ENCODE measurements at regions of chr6 and their contacts with region 1.

Region 1: DNA sequence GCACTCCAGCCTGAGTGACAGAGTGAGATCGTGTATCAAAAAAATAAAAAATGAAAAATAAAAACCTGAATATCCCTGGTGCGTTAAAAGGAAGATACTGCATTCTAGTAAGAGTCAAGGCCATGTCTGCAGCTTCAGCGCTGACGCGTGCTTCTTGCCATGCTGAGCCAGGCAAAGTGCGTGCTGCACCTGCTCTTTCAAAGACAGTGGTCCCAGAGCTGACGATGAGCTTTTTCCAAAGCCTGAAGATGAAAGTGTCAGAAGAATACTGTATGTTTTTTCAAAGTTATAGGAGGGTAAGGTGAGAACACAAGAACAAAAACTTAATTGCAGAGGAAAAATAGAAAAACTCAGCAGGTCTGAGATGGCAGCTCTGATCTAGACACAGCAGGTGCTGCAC is 115.1 kb downstream of the RNASET2 start:
- DNase-seq: no peak
- H3K4me3 ChIP-seq: no peak overlapping the region
- CTCF ChIP-seq: no peak

Region 2: DNA sequence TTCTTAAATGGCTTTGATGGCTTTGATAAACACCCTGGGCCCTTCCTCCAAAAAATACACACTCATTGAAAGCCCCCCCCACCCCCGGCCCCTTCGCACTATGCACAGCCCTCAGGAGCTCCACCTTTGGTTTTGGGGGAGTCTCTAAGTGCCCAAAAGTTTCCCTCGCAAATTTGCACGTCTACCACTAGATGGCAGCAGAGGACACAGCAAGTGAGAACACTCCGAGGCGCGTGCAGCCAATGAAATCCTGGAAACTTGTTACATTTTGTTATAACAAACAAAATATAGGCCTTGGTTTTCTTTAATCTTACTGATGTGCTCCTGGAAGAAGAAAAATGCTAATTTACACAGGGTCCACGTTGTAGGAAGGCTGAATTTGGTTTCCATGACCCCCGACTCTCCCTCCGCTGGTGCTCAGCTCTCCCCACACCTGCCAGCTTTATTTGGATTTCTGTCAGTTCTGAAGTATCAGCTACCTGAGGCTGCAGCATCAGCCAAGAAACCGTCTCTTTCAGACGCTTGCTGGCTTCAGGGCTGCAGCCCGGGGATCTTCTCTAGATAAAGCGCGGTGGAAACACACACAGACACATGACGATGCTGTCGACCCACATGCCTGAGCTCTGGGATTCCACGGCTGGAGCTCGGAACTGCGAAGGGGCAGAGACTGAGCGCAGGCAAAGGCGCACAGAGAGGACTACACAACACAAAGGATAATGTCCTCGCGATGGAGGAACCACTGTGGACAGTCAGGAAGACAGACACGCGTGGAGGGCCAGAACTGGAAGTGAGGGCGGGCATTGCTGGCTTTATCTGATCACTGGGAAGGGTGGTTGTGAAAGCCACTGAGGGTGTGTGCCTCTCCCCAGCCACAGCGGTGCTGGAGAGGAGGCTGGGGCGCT is 65.8 kb before region 1 on chr6:
- in situ Hi-C with region 1: no loop called
- DNase-seq: peak; percentile 69
- H3K4me3 ChIP-seq: no peak overlapping the region
- CTCF ChIP-seq: peak; percentile 93

Region 3: GRCh38 chr6:166877906-166878305 is 36.7 kb after region 1 on chr6:
- in situ Hi-C with region 1: loop called (anchors 5 kb)
- DNase-seq: peak; percentile 6
- H3K4me3 ChIP-seq: no peak overlapping the region
- CTCF ChIP-seq: no peak